SK-N-SH (cell line): ENCODE measurements at regions of chrX and their contacts with region 1.

Region 1: DNA sequence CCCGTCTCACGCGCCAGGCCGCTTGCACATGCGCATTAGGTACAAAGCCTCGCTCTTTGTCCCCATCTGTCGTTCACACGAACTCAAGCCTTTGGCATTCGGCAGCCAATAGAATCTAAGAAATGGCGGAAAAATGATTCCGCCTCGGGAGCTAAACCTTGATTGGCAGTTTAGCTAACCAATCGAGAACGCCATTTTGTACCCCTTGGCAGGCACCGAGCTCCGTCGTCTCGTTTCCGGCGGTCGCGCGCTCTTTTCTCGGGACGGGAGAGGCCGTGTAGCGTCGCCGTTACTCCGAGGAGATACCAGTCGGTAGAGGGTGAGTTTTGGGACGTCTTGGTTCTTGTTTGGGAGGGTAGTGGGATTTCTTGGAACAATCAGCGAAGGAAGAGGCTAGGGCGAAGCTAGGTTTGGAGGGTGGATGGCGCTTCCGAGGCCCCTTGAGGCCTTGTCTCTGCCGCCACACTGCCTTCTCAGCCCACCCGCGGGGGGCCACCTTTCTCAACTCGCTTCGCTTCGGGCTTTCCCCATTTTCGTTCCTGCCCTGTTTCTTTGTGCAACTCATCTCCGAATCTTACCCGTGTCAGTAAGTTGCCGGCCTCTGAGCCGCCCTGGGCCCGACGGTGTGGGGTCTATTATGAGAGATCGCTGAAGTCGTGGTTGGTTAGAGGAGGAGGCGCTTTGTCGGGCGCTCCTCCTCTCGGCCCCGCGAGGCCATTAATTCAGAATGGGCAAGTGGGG is at the start of gene NONO:
- DNase-seq: peak; percentile 91
- H3K4me3 ChIP-seq: peak within 1 kb of the TSS; percentile 76 to 88
- H3K27ac ChIP-seq: peak within 1 kb of the TSS; percentile 96 to 97
- H3K4me1 ChIP-seq: peaks cover 0 to 6% of the 10 kb centered on the region in 2 experiments; a peak in 3 of 4 replicates
- H3K27me3 ChIP-seq: no peaks in the 10 kb centered on the region; the same call in 1 of the 2 replicates
- CTCF ChIP-seq: peak; percentile 26; the same call in 1 of the 2 replicates
- EP300 ChIP-seq: no peak
- RAD21 ChIP-seq: no peak
- polyA plus RNA-seq, gene NONO: 210 and 288 TPM in 2 replicates

Region 2: DNA sequence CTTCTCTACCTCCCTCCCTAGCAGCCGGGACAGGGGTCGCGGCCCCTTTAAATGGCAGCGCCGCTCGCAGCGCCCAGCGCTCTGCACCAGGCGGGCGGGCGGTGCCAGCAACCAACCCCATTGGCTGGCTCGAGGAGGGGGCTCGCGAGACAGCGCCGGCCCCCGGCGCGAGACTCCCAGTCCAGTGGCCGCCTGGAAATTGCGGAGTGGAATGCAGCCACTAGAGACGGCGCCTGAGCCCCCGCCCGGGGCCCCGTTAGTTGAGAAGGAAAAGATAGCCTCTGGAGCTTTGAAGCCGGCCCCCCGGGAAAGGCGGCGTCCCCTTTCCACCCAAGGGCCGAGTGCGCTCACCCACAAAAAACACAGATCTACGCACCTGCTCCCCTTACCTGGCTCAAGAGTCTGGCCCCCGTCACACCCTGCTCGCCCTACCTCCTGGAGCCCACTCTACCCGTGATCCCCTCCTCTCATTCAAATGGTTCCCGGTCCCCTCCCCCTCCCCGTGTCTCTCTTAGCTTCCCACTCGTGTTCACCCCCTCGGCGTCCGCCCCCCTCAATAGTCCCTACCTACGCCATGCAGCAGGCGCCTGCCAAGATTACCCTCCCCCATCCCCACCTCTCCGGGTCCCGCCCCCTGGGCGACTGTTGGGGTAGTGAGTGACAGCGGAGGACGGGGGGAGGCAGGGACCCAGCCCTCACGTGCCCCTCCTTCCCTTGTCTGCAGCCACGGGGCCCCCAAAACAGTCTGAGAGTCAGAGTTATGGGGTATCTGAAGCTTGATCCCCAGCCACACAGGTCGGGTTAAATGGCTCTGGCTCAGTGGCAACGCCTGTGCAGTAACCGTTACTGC is 29.3 kb before region 1 on chrX and contains the start of gene ZMYM3:
- CTCF ChIA-PET with region 1: interaction called, 3 read pairs
- POLR2A ChIA-PET with region 1: interaction called, 12 read pairs
- DNase-seq: peak; percentile 96
- H3K4me3 ChIP-seq: peak within 1 kb of the TSS; percentile 86 to 87
- H3K27ac ChIP-seq: peak within 1 kb of the TSS; percentile 53 to 81
- H3K4me1 ChIP-seq: peaks cover 9 to 12% of the 10 kb centered on the region in 2 experiments; a peak in 2 of 4 replicates
- H3K27me3 ChIP-seq: no peaks in the 10 kb centered on the region
- CTCF ChIP-seq: no peak
- EP300 ChIP-seq: no peak
- RAD21 ChIP-seq: no peak
- polyA plus RNA-seq, gene ZMYM3: 30.4 and 31.4 TPM in 2 replicates

Region 3: GRCh38 chrX:71365876-71366673 is 82.5 kb after region 1 on chrX and contains the start of gene TAF1:
- CTCF ChIA-PET with region 1: interaction called, 5 read pairs
- POLR2A ChIA-PET with region 1: interaction called, 19 read pairs
- DNase-seq: peak; percentile 89
- H3K4me3 ChIP-seq: peak within 1 kb of the TSS; percentile 63 to 89
- H3K27ac ChIP-seq: peak within 1 kb of the TSS; percentile 77 to 90
- H3K4me1 ChIP-seq: peaks cover 7 to 10% of the 10 kb centered on the region in 2 experiments; a peak in 2 of 4 replicates
- H3K27me3 ChIP-seq: no peaks in the 10 kb centered on the region; the same call in 1 of the 2 replicates
- CTCF ChIP-seq: no peak
- EP300 ChIP-seq: no peak; a peak in 1 of 4 replicates
- RAD21 ChIP-seq: 0 out of 2 replicates have a peak, but pooled peaks have one; percentile 4
- polyA plus RNA-seq, gene TAF1: 25.0 and 27.6 TPM in 2 replicates